ENCODE measurements at regions of chr9 and their contacts with region 1.

Region 1: DNA sequence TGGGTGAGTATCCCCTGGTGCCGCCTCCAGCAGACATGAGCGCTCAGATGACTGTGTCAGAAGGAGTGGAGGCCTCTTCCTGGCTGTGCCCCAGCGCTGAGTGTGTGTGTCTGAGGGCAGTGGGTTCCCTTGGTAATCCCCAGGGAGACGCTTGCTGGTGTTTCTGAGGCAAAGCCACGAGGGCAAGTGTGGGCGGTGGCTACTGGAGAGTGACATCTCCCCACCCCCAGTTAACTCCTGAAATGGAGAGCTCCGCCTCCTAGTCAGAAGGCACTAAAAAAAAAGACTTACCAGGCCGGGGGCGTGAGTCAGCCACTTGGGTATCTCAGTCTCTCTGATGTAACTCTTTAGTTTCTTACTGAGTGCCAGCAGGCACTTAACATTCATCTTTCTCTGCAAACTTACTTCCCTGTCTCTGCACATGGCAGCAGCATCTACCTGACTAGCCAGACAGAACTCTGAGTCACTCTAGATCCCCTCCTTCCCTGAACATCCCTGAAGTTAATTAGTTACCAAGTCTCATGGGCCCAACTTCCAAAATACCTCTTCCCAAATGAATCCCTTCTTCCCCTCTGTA is 19.3 kb downstream of the ORM2 start:
- DNase-seq: peak; percentile 97
- ATAC-seq: peak; percentile 88
- H3K4me3 Mint-ChIP-seq: peak overlapping the region; percentile 47
- H3K27ac Mint-ChIP-seq: peak overlapping the region; percentile 97
- H3K4me1 Mint-ChIP-seq: peaks cover 65% of the 10 kb centered on the region
- H3K27me3 Mint-ChIP-seq: no peaks in the 10 kb centered on the region

Region 2: GRCh38 chr9:114321759-114322158 is 27.2 kb before region 1 on chr9:
- CTCF ChIA-PET with region 1: no interaction called
- POLR2A ChIA-PET with region 1: interaction called, 3 read pairs
- intact Hi-C with region 1: loop called in 1 of 2 experiments (anchors 2 kb)
- DNase-seq: peak; percentile 76
- ATAC-seq: peak; percentile 57
- H3K4me3 Mint-ChIP-seq: no peak overlapping the region
- H3K27ac Mint-ChIP-seq: peak overlapping the region; percentile 25
- H3K4me1 Mint-ChIP-seq: peaks cover 20% of the 10 kb centered on the region
- H3K27me3 Mint-ChIP-seq: peaks cover 4% of the 10 kb centered on the region

Region 3: GRCh38 chr9:114366334-114367128 is 17.5 kb after region 1 on chr9:
- CTCF ChIA-PET with region 1: interaction called, 12 read pairs
- POLR2A ChIA-PET with region 1: interaction called, 8 read pairs
- intact Hi-C with region 1: loop called (anchors 1 kb)
- DNase-seq: peak; percentile 69
- ATAC-seq: peak; percentile 72
- H3K4me3 Mint-ChIP-seq: peak overlapping the region; percentile 16
- H3K27ac Mint-ChIP-seq: peak overlapping the region; percentile 84
- H3K4me1 Mint-ChIP-seq: peaks cover 82% of the 10 kb centered on the region
- H3K27me3 Mint-ChIP-seq: no peaks in the 10 kb centered on the region

Region 4: GRCh38 chr9:114372921-114373448 is 24.0 kb after region 1 on chr9:
- CTCF ChIA-PET with region 1: interaction called, 13 read pairs
- POLR2A ChIA-PET with region 1: interaction called, 3 read pairs
- intact Hi-C with region 1: loop called in 1 of 2 experiments (anchors 1 kb)
- DNase-seq: peak; percentile 91
- ATAC-seq: peak; percentile 85
- H3K4me3 Mint-ChIP-seq: peak overlapping the region; percentile 64
- H3K27ac Mint-ChIP-seq: peak overlapping the region; percentile 89
- H3K4me1 Mint-ChIP-seq: peaks cover 84% of the 10 kb centered on the region
- H3K27me3 Mint-ChIP-seq: no peaks in the 10 kb centered on the region

Region 5: DNA sequence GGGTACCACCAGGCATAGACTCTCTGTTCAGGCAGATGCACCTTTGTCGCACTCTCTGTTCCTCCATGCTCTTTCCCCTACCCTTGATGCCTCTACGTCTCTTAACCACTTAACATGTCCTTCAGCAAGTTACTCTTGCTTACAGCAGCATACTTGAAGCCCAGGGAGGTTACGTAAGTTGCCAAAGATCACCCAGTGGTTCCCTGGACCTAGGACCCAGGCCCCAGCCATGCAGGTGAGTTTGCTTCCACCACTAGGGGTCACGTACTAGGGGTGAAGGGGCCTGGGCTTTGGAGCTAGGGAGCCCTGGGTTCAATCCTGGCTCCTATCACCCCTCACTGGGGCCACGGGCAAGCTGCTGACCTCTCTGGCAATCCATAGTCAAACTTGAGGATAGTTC is 29.9 kb after region 1 on chr9:
- CTCF ChIA-PET with region 1: interaction called, 13 read pairs
- POLR2A ChIA-PET with region 1: interaction called, 3 read pairs
- intact Hi-C with region 1: no loop called
- DNase-seq: no peak
- ATAC-seq: no peak
- H3K4me3 Mint-ChIP-seq: no peak overlapping the region
- H3K27ac Mint-ChIP-seq: peak overlapping the region; percentile 81
- H3K4me1 Mint-ChIP-seq: peaks cover 89% of the 10 kb centered on the region
- H3K27me3 Mint-ChIP-seq: no peaks in the 10 kb centered on the region

Region 6: GRCh38 chr9:114587385-114588202 is 238.6 kb after region 1 on chr9 and contains the start of gene ATP6V1G1:
- CTCF ChIA-PET with region 1: no interaction called
- POLR2A ChIA-PET with region 1: no interaction called
- intact Hi-C with region 1: loop called in 1 of 2 experiments (anchors 2 kb)
- DNase-seq: peak; percentile 100
- ATAC-seq: peak; percentile 96
- H3K4me3 Mint-ChIP-seq: peak within 1 kb of the TSS; percentile 99
- H3K27ac Mint-ChIP-seq: peak within 1 kb of the TSS; percentile 100
- H3K4me1 Mint-ChIP-seq: peaks cover 44% of the 10 kb centered on the region
- H3K27me3 Mint-ChIP-seq: no peaks in the 10 kb centered on the region
- total RNA-seq, gene ATP6V1G1: 33.8 to 37.7 TPM